ENCODE measurements at regions of chr14 and their contacts with region 1.

Region 1: GRCh38 chr14:64503478-64504309 is at the start of gene ZBTB25:
- DNase-seq: peak; percentile 94
- H3K4me3 Mint-ChIP-seq: peak within 1 kb of the TSS; percentile 91
- H3K27ac Mint-ChIP-seq: peak within 1 kb of the TSS; percentile 99
- H3K4me1 Mint-ChIP-seq: peaks cover 53% of the 10 kb centered on the region
- H3K27me3 Mint-ChIP-seq: no peaks in the 10 kb centered on the region
- total RNA-seq, gene ZBTB25: 22.6 to 23.5 TPM

Region 2: GRCh38 chr14:63543000-63543825 is 960.5 kb before region 1 on chr14 and contains the start of gene PPP2R5E:
- CTCF ChIA-PET with region 1: no interaction called
- intact Hi-C with region 1: loop called (anchors 1 kb)
- DNase-seq: peak; percentile 99
- H3K4me3 Mint-ChIP-seq: peak within 1 kb of the TSS; percentile 96
- H3K27ac Mint-ChIP-seq: peak within 1 kb of the TSS; percentile 83
- H3K4me1 Mint-ChIP-seq: peaks cover 25% of the 10 kb centered on the region
- H3K27me3 Mint-ChIP-seq: no peaks in the 10 kb centered on the region
- total RNA-seq, gene PPP2R5E: 30.0 to 32.5 TPM

Region 3: DNA sequence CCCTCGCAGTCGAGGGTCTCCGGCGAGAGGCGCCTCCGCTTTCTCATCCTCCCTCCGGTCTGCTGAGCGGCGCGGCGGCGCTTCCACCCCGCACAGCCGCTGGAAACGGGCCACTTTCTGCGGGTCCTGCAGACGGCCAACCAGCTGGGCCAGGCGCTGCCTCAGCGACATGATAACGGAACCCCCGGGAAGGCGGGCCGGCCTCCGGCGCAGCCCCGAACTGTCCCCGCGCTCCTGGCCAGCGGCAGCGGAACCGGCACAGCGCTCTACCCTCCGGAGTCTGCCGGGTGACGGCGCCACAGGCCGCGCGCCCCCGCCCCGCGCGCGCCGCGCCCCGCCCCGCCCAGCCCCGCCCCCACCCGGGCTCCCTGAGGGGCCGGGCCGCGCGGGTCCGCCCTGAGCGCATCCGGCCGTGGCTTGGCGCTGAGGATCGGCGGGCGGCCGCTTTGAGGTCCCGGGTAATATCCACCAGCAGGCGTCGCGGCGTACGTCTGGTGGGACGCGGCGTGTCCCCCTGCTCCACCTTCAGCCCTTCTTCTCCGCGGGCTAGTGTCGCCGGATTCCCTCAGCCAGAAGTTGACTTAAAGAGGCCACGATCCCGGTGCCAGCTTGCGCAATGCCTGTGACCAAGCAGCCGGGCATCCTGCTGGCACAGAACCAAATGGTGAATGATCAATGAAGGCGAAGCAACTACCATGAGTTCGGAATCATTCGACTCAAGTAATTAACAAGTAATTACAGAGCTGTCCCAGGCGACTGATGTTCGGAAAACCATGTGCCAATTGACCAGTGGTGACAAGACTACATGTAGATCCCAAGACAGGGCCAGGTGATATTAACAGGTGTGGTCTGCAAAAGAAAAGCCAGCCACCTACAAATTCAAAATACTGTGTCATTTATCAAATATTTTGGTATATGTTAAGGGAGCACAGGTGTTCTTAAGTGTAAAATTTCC is 775.6 kb before region 1 on chr14 and contains the start of gene SGPP1:
- CTCF ChIA-PET with region 1: no interaction called
- intact Hi-C with region 1: loop called (anchors 10 kb)
- DNase-seq: peak; percentile 80
- H3K4me3 Mint-ChIP-seq: peak within 1 kb of the TSS; percentile 99
- H3K27ac Mint-ChIP-seq: peak within 1 kb of the TSS; percentile 83
- H3K4me1 Mint-ChIP-seq: peaks cover 30% of the 10 kb centered on the region
- H3K27me3 Mint-ChIP-seq: no peaks in the 10 kb centered on the region
- total RNA-seq, gene SGPP1: 10.1 to 10.6 TPM

Region 4: GRCh38 chr14:64026600-64026999 is 477.1 kb before region 1 on chr14:
- CTCF ChIA-PET with region 1: no interaction called
- intact Hi-C with region 1: no loop called
- DNase-seq: no peak
- H3K4me3 Mint-ChIP-seq: no peak overlapping the region
- H3K27ac Mint-ChIP-seq: no peak overlapping the region
- H3K4me1 Mint-ChIP-seq: no peaks in the 10 kb centered on the region
- H3K27me3 Mint-ChIP-seq: no peaks in the 10 kb centered on the region

Region 5: GRCh38 chr14:64387694-64388532 is 115.8 kb before region 1 on chr14 and contains the start of gene MTHFD1:
- CTCF ChIA-PET with region 1: interaction called, 5 read pairs
- intact Hi-C with region 1: loop called (anchors 1 kb)
- DNase-seq: peak; percentile 99
- H3K4me3 Mint-ChIP-seq: peak within 1 kb of the TSS; percentile 92
- H3K27ac Mint-ChIP-seq: peak within 1 kb of the TSS; percentile 94
- H3K4me1 Mint-ChIP-seq: peaks cover 26% of the 10 kb centered on the region
- H3K27me3 Mint-ChIP-seq: no peaks in the 10 kb centered on the region
- total RNA-seq, gene MTHFD1: 240 to 247 TPM

Region 6: DNA sequence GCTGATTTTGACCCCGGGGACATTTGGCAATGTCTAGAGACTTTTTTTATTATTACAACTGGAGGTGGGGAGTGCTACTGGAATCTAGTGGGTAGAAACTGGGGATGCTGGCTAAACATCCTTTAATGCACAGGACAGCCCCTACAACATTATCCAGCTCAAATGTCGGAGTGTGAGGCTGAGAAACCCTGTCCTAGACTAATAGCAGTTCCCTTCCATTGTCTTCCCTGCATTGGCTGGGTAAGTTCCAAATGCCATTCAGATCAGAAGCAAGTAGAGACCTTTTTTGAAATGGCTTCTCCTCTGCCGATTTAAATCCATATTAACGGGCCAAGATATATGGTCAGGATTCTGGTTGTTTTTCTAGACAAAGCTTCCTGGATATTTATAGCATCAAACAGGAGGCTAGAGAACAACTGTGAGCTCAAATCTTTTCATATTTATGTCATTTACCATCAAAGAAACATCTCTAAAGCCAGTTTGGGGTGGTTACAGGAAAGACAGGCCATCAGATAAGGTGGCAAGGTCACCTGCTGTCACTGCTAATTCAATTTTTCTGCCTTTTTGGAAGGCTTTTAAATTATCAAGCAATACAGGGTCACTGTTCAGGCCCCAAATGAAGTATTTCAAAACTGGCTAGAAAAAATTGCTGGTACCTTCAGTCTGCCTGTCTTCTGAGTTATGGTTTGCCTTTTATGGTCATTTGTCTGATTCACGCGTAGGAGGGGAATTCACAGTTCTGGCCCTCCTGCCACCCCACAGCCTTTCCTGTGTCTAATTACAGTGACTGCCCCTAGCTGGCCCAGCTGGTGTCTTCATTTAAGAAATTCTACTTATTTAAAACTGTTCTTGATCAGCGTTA is 58.5 kb before region 1 on chr14:
- CTCF ChIA-PET with region 1: no interaction called
- intact Hi-C with region 1: no loop called
- DNase-seq: peak; percentile 55
- H3K4me3 Mint-ChIP-seq: no peak overlapping the region
- H3K27ac Mint-ChIP-seq: peak overlapping the region; percentile 75
- H3K4me1 Mint-ChIP-seq: peaks cover 32% of the 10 kb centered on the region
- H3K27me3 Mint-ChIP-seq: no peaks in the 10 kb centered on the region

Region 7: DNA sequence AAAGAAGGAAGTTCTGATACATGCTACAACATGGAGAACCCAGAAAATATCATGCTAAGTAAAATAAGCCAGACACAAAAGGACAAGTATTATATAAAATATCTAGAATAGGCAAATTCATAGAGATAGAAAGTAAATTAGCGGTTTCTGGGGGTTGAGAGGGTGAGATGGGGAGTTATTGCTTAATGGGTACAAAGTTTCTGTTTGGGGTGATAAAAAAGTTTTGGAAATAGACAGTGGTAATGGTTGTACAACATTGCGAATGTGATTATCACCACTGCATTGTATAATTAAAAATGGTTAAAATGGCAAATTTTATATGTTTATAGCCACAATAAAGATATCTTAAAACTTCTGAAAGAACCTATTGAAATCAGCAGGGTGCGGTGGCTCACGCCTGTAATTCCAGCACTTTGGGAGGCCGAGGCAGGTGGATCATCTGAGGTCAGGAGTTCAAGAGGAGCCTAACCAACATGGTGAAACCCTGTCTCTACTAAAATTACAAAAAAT is 15.0 kb before region 1 on chr14:
- CTCF ChIA-PET with region 1: interaction called, 4 read pairs
- intact Hi-C with region 1: loop called (anchors 2 kb)
- DNase-seq: no peak
- H3K4me3 Mint-ChIP-seq: no peak overlapping the region
- H3K27ac Mint-ChIP-seq: no peak overlapping the region
- H3K4me1 Mint-ChIP-seq: peaks cover 34% of the 10 kb centered on the region
- H3K27me3 Mint-ChIP-seq: no peaks in the 10 kb centered on the region

Region 8: DNA sequence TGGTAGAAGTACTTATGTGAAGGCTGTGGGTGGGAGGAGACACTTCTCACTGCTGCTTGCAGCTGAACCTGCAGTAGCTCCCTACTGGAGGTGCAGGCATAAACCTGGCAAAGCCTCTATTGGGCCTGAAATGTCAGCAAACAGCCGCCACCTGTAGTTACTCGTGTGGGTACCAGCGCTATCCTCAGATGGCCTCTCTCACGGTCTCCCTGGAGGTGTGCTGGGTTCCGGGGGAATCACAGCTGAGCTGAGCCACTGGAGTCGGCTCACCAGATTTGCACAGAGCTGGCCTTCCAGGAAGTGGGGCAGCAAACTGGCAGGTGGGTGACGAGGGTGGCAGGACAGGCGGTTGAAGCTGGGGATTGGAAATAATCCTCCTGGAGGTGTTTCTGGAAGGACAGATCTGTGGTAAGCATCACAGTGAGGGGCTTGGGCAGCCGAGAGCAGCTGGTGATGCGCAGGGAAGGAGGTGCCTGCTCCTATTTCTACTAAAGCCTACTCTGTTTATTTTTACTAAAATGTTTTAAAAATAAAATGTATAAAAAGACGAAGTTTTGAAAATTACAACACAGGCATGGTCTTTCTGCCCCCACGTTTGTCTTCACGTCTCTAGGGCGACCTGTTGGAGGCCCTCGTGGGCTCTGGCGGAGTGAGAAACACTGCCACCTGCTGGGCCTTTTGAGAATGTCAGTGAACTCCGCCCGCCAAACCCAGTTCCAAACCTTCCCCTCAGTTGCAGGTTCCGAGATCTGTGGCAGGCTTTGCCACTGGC is 132.7 kb after region 1 on chr14:
- CTCF ChIA-PET with region 1: no interaction called
- intact Hi-C with region 1: loop called (anchors 1 kb)
- DNase-seq: peak; percentile 81
- H3K4me3 Mint-ChIP-seq: no peak overlapping the region
- H3K27ac Mint-ChIP-seq: no peak overlapping the region
- H3K4me1 Mint-ChIP-seq: no peaks in the 10 kb centered on the region
- H3K27me3 Mint-ChIP-seq: no peaks in the 10 kb centered on the region

Region 9: DNA sequence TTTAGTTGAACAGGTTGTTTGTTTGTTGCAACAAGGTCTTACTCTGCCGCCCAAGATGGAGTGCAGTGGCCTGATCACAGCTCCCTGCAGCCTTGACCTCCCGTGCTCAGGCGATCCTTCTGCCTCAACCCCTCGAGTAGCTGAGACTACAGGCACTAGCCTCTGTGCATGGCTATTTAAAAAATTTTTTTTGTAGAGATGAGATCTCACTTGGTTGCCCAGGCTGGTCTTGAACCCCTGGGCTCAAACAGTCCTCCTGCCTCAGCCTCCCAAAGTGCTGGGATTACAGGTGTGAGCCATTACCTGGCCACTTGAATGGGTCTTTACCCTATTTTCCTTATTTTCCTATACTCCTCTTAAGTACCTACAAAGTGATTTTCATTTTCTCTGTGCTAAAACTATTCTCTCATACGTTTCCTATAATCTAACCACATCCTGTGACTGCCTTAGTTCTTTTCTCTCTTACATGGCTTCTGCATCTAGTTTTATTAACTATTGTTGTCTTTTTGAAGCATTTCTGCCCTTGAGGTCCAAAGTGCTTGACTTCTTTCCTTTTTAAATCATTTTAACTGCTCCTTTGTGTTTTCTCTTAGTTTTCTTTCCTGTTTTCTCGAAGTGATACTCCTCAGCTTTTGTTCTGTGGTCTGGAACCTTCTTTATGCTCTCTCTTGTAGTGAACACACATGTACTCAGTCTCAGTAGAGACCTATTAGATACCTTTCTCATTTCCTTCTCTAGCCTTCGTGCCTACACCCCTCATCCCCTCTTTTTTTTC is 424.7 kb after region 1 on chr14:
- CTCF ChIA-PET with region 1: no interaction called
- intact Hi-C with region 1: loop called (anchors 5 kb)
- DNase-seq: no peak
- H3K4me3 Mint-ChIP-seq: no peak overlapping the region
- H3K27ac Mint-ChIP-seq: no peak overlapping the region
- H3K4me1 Mint-ChIP-seq: peaks cover 25% of the 10 kb centered on the region
- H3K27me3 Mint-ChIP-seq: no peaks in the 10 kb centered on the region